ENCODE measurements at regions of chr11 and their contacts with region 1.

Region 1: GRCh38 chr11:304915-305843 is 2.4 kb upstream of the IFITM2 start:
- DNase-seq: peak; percentile 44
- H3K4me3 ChIP-seq: no peak overlapping the region; the same call in 1 of the 2 replicates
- CTCF ChIP-seq: peak; percentile 48

Region 2: DNA sequence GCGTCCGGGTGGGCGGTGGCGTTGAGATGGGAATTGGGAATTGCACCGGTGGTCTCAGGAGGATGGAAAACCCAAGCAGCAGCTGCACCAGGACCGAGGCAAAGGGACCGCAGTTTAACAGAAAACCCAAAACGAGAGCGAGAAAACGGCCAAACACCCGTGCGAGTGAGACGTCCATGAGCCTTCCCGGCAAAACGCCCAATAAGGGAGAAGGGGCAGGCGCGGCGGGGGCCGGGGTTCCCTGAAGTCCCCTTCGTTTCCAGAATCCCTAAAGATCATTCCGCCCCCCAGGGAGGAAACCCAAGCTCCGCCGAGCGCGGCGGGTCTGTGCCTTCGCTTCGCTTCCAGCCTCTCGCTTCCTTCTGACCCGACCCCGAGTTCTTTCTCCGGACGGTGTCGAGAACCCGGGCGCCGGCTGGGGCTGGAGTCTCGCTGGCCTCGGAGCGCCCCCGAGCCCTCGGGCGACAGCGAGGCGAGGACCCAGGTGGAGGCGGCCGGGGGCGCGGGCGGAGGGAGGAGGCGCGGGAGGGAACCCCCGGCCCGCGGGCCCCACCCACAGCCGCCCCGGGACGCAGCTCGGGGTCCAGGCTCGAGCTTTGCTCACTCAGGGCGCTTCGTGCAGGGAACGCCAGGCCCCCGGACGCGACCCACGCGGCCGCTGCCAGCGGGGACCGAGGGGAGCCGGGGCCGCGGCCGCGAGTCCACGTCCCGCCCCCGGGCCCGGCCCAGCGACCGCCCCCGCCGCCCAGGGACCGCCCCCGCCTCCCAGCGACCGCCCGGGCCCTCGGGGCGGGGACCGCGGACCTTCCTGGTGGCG is 16.6 kb before region 1 on chr11 and contains the start of gene PGGHG:
- CTCF ChIA-PET with region 1: interaction called, 68 read pairs
- POLR2A ChIA-PET with region 1: no interaction called
- DNase-seq: no peak
- H3K4me3 ChIP-seq: peak within 1 kb of the TSS; percentile 61
- CTCF ChIP-seq: no peak

Region 3: DNA sequence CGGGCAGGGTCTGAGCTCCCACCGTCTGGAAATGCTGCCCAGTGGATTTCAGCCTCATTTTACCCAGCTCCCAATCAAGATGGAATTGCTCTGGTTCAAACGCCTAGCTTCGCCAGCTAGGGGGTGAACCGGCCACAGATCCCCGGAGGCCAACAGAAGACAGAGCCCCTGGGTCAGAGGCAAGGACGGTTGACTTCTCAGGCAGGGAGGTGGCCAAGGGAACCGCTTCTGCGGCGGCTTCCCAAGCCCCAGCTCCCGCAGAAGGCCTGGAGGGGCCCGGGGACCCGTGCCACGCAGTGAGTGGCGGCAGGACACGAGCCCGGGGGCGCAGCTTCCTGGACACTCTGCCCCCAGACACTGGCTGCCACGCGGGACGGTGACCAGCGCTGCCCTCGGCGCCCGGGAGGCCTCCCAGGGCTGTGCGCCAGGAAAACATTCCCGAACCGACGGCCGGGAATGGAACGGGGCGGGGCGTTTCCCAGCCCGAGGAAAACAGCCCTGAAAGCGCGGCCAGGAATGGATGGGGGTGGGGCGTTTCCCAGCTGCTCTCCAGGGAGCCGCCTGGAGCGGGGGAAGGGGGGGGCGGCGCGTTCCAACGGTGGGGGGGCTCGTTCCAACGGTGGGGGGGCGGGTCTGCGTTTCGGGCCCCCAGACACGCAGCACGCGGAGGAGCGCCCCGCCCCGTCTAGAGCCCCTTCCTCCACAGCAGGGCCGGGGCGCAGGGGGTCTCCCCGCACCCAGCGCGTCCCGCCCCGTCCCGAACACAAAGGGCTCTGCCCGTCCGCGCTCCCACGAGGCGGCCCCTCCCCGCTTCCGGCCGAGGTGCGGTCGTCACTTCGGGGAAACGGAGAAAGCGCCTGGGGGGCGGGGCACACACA is 50.6 kb after region 1 on chr11:
- CTCF ChIA-PET with region 1: interaction called, 69 read pairs
- POLR2A ChIA-PET with region 1: interaction called, 3 read pairs
- DNase-seq: peak; percentile 70
- H3K4me3 ChIP-seq: peak overlapping the region; percentile 38
- CTCF ChIP-seq: no peak

Region 4: GRCh38 chr11:363948-364761 is 59.0 kb after region 1 on chr11:
- CTCF ChIA-PET with region 1: interaction called, 69 read pairs
- POLR2A ChIA-PET with region 1: no interaction called
- DNase-seq: no peak
- H3K4me3 ChIP-seq: no peak overlapping the region
- CTCF ChIP-seq: peak; percentile 39

Region 5: GRCh38 chr11:369336-370018 is 64.3 kb after region 1 on chr11 and contains the start of gene B4GALNT4:
- CTCF ChIA-PET with region 1: interaction called, 69 read pairs
- POLR2A ChIA-PET with region 1: no interaction called
- DNase-seq: no peak
- H3K4me3 ChIP-seq: peak within 1 kb of the TSS; percentile 70
- CTCF ChIP-seq: no peak

Region 6: GRCh38 chr11:396948-397548 is 91.9 kb after region 1 on chr11:
- CTCF ChIA-PET with region 1: interaction called, 13 read pairs
- POLR2A ChIA-PET with region 1: interaction called, 3 read pairs
- DNase-seq: no peak
- H3K4me3 ChIP-seq: peak overlapping the region; percentile 29; the same call in 1 of the 2 replicates
- CTCF ChIP-seq: peak; percentile 71

Region 7: GRCh38 chr11:535519-536454 is 230.6 kb after region 1 on chr11 and contains the start of gene HRAS:
- CTCF ChIA-PET with region 1: no interaction called
- POLR2A ChIA-PET with region 1: no interaction called
- DNase-seq: no peak
- H3K4me3 ChIP-seq: peak within 1 kb of the TSS; percentile 73
- CTCF ChIP-seq: no peak